Activated CD4-positive, alpha-beta T cell treated with anti-CD3 and anti-CD28 coated beads for 36 hours (primary cell): ENCODE measurements at regions of chr6 and their contacts with region 1.

Region 1: DNA sequence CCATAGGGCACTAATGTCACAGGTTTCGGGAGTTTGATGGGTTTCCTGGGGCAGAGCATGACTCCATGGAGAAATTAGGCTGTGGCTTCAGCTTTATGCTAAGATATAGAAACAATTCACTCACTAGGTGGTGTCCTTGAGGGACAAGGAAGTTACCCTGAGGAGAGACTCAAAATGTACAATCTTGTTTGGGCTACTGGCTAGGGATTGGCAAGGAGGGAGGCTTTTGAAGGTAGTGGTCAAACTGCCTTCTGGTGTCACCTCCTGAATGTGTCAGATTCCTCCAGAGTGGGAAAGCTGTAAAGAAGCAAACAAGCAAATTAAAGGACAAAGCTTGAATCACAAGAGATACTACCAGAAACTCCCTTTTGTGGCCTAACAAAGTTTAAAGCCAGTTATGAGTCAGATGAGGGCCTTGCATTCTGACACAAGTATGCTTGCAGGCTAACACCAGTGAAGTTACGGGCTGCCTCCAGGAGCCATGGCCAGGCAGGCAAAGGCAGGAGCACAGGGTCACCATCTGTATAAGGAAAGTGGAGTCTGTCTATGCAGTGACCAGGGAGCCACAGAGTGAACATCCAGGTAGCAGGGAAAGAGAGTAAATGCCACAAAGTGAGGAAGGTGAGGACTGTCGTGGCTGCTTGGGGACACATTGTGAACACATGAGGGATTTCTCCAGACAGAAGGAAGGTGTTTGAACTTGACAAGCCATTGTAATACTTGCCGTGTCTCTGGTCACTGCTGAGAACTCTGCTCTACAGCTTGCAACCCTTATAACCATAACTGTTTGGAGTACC is 107.7 kb upstream of the DTNBP1 start:
- DNase-seq: peak; percentile 46
- ATAC-seq: peak; percentile 87
- H3K4me3 Mint-ChIP-seq: no peak overlapping the region
- H3K27ac Mint-ChIP-seq: peak overlapping the region; percentile 92
- H3K4me1 Mint-ChIP-seq: peaks cover 46% of the 10 kb centered on the region
- H3K27me3 Mint-ChIP-seq: no peaks in the 10 kb centered on the region

Region 2: GRCh38 chr6:15044146-15044882 is 726.2 kb before region 1 on chr6:
- CTCF ChIA-PET with region 1: no interaction called
- POLR2A ChIA-PET with region 1: no interaction called
- intact Hi-C with region 1: no loop called
- DNase-seq: no peak
- ATAC-seq: no peak
- H3K4me3 Mint-ChIP-seq: no peak overlapping the region
- H3K27ac Mint-ChIP-seq: no peak overlapping the region
- H3K4me1 Mint-ChIP-seq: peaks cover 4% of the 10 kb centered on the region
- H3K27me3 Mint-ChIP-seq: no peaks in the 10 kb centered on the region

Region 3: DNA sequence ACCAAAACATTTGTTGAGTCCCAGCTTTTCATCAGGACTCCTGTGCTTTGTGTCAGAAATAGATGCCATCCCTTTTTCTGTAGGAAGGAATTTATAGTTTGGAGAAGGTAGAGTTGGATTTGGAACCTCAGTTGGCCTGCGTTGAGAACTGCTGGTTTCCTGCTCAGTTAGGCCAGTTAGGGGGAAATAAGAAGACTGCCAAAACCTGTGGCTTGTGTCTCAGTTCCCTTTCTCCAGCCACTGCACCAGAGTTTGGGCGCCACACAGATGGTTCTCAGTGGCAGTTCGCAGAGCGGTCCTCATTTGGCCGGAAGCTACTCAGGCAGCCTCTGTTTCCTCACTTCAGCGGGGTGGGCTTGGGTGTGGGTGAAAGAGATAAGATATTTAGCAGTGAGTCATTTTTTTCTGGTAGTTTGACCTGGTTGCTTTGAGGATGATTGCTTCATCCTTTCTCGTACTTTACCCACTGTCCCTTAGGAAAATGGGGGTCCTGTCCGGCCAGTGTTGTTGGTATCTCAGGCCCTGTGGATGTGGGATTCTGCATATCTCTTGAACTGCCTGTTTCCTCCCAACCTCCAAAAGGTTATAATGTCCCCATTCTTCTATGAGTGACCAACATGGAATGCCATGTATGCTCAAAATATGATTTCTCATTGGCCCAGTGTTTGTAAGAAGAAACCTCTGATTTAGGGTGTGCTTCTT is 471.0 kb before region 1 on chr6:
- CTCF ChIA-PET with region 1: no interaction called
- POLR2A ChIA-PET with region 1: no interaction called
- intact Hi-C with region 1: loop called in 1 of 2 experiments (anchors 10 kb)
- DNase-seq: peak; percentile 48
- ATAC-seq: no peak
- H3K4me3 Mint-ChIP-seq: peak overlapping the region; percentile 18
- H3K27ac Mint-ChIP-seq: peak overlapping the region; percentile 69
- H3K4me1 Mint-ChIP-seq: peaks cover 83% of the 10 kb centered on the region
- H3K27me3 Mint-ChIP-seq: no peaks in the 10 kb centered on the region

Region 4: DNA sequence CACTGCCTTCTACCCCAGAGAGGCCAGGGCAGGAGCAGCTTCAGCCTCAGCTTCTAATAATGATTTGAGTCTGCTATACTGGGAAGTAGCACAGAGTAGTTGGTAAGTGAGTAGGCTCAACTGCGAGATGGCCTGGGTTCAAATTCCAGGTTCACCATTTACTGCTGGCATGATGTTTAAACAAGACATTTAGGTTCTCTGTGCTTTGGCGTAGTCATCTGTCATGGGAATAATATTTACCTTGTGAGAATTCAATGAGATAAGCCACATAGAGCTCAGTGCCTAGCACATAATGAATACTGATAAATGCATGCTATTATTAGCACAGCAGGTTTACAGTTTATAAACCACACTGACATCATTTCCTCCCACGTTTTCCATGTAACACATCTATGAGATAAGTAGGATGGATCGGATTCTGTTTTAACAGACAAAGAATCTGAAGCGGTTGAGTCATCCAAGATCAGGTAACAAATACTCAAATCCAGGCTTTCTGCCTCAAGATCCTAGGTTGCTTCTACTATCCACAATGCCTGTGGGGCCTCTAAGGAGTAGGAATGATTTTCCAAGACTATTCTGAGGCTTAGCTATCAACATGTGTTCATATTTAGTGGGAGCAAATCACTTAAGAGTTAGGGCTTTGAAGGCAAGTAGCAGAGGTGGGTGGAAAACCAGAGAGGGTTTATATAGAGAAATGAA is 34.8 kb before region 1 on chr6:
- CTCF ChIA-PET with region 1: interaction called, 6 read pairs
- POLR2A ChIA-PET with region 1: no interaction called
- intact Hi-C with region 1: loop called in 1 of 2 experiments (anchors 2 kb)
- DNase-seq: peak; percentile 20
- ATAC-seq: peak; percentile 81
- H3K4me3 Mint-ChIP-seq: peak overlapping the region; percentile 54
- H3K27ac Mint-ChIP-seq: peak overlapping the region; percentile 83
- H3K4me1 Mint-ChIP-seq: peaks cover 54% of the 10 kb centered on the region
- H3K27me3 Mint-ChIP-seq: no peaks in the 10 kb centered on the region

Region 5: GRCh38 chr6:15786846-15787245 is 16.3 kb after region 1 on chr6:
- CTCF ChIA-PET with region 1: no interaction called
- POLR2A ChIA-PET with region 1: no interaction called
- intact Hi-C with region 1: no loop called
- DNase-seq: no peak
- ATAC-seq: no peak
- H3K4me3 Mint-ChIP-seq: no peak overlapping the region
- H3K27ac Mint-ChIP-seq: no peak overlapping the region
- H3K4me1 Mint-ChIP-seq: no peaks in the 10 kb centered on the region
- H3K27me3 Mint-ChIP-seq: peaks cover 5% of the 10 kb centered on the region

Region 6: GRCh38 chr6:16690608-16691198 is 920.2 kb after region 1 on chr6:
- CTCF ChIA-PET with region 1: no interaction called
- POLR2A ChIA-PET with region 1: no interaction called
- intact Hi-C with region 1: loop called in 1 of 2 experiments (anchors 10 kb)
- DNase-seq: peak; percentile 73
- ATAC-seq: peak; percentile 75
- H3K4me3 Mint-ChIP-seq: peak overlapping the region; percentile 34
- H3K27ac Mint-ChIP-seq: peak overlapping the region; percentile 88
- H3K4me1 Mint-ChIP-seq: peaks cover 88% of the 10 kb centered on the region
- H3K27me3 Mint-ChIP-seq: no peaks in the 10 kb centered on the region